ENCODE measurements at regions of chr9 and their contacts with region 1.

Region 1: GRCh38 chr9:130186839-130187522 is 14.8 kb downstream of the NCS1 start:
- DNase-seq: no peak
- ATAC-seq: peak; percentile 40 to 84 (median 72)
- H3K4me3 ChIP-seq: peak overlapping the region in 5 of 10 donors; percentile 19 to 32 (median 30)
- H3K27ac ChIP-seq: peak overlapping the region in 3 of 10 donors; percentile 25 to 53 (median 47)
- H3K4me1 ChIP-seq: peaks cover 5 to 40% (median 17%) of the 10 kb centered on the region in 9 donors
- H3K27me3 ChIP-seq: no peaks in the 10 kb centered on the region
- CTCF ChIP-seq: no peak

Region 2: GRCh38 chr9:130143958-130144366 is 43.0 kb before region 1 on chr9:
- intact Hi-C with region 1: loop called in 1 of 10 experiments (anchors 5 kb)
- DNase-seq: peak; percentile 36 to 57
- ATAC-seq: peak; percentile 76 to 88 (median 82)
- H3K4me3 ChIP-seq: no peak overlapping the region
- H3K27ac ChIP-seq: peak overlapping the region in 1 of 10 donors; percentile 23
- H3K4me1 ChIP-seq: peaks cover 4 to 39% (median 28%) of the 10 kb centered on the region in 9 donors
- H3K27me3 ChIP-seq: peaks cover 0 to 43% (median 14%) of the 10 kb centered on the region in 7 donors
- CTCF ChIP-seq: no peak

Measured in heart right ventricle (tissue), 16 donors.